ENCODE measurements at regions of chr10 and their contacts with region 1.

Region 1: GRCh38 chr10:100009793-100010676 is at the start of gene DNMBP:
- DNase-seq: peak; percentile 82 to 91
- ATAC-seq: peak; percentile 72 to 89
- H3K4me3 ChIP-seq: peak within 1 kb of the TSS; percentile 81
- H3K27ac ChIP-seq: peak within 1 kb of the TSS; percentile 83 to 92
- H3K4me1 ChIP-seq: peaks cover 31% of the 10 kb centered on the region
- CTCF ChIP-seq: peak; percentile 90
- EP300 ChIP-seq: no peak
- POLR2A ChIP-seq: peak; percentile 37
- RAD21 ChIP-seq: peak; percentile 34 to 60; a peak in 4 of 5 replicates
- polyA plus RNA-seq, gene DNMBP: 20.3 and 24.3 TPM in 2 replicates

Region 2: DNA sequence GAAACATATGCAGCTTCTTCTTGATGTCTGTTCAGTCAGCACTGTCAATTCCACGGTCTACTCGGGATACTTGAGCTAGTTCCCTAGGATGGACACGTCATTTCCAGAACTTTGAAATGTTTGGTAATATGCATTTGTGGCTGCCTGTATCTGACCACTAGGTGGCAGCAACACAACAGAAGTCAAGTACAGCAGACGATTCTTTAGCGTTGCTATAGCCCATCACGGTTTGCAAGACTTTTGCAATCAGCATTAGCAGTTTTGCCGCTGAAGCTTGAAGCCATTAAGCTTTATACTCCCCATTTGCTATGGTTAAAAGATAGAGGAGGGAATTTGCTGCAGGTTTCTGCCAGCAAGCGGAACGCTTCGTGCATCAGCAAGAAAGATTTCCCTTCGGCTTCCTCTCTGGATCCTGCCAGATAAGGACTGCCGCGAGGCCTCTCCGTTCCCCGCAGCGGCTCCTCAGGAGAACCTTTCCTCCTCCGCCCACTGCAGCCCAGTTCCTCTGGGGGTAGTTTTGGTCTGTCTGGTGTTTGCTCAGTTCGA is 164.1 kb before region 1 on chr10:
- CTCF ChIA-PET with region 1: interaction called, 26 read pairs
- POLR2A ChIA-PET with region 1: interaction called, 3 read pairs
- DNase-seq: peak; percentile 60 to 92
- ATAC-seq: peak; percentile 72 to 78
- H3K4me3 ChIP-seq: no peak overlapping the region
- H3K27ac ChIP-seq: peak overlapping the region in 1 of 2 experiments; percentile 31; a peak in 2 of 6 replicates
- H3K4me1 ChIP-seq: peaks cover 56% of the 10 kb centered on the region
- CTCF ChIP-seq: peak; percentile 92
- EP300 ChIP-seq: no peak
- POLR2A ChIP-seq: no peak
- RAD21 ChIP-seq: peak; percentile 81 to 82

Region 3: DNA sequence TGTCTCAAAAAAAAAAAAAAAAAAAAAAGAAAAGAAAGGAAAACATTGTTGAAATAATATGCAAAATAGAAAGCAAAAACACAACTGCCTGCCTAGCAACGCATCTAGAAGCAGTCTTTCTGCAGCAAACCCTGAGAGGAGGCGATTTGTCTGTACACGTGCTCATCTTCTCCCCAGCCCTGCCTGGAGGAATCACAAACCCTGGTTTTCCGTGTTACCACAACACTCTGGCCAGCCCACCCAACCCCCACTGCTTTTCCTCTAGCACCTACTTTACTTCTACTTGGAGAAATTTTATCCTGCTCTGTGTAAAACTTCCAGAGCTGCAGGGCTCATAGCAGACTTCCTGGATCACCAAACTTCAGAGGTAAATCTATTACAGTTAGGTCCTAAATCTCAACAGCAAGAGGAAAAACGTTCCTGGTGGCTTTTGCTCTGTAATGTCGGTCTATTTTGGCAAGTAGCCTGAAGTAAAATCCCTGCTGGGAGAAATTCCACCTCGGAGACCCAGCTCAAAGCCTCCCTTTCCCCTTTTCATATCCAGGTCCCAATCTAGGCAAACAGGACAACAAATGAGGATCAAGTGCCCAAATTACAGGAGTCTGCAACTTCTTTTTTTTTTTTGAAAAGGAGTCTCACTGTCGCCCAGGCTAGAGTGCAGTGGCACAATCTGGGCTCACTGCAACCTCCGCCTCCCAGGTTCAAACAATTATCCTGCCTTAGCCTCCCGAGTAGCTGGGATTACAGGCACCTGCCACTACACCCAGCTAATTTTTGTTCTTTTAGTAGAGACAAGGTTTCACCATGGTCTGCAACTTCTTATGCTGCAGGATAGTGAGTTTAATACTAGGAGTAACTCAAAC is 91.8 kb before region 1 on chr10:
- CTCF ChIA-PET with region 1: interaction called, 15 read pairs
- POLR2A ChIA-PET with region 1: interaction called, 3 read pairs
- DNase-seq: peak in 1 of 2 experiments; percentile 56
- ATAC-seq: peak; percentile 76 to 82
- H3K4me3 ChIP-seq: peak overlapping the region; percentile 32
- H3K27ac ChIP-seq: peak overlapping the region; percentile 84 to 85
- H3K4me1 ChIP-seq: peaks cover 42% of the 10 kb centered on the region
- CTCF ChIP-seq: no peak
- EP300 ChIP-seq: no peak
- POLR2A ChIP-seq: no peak
- RAD21 ChIP-seq: no peak

Region 4: DNA sequence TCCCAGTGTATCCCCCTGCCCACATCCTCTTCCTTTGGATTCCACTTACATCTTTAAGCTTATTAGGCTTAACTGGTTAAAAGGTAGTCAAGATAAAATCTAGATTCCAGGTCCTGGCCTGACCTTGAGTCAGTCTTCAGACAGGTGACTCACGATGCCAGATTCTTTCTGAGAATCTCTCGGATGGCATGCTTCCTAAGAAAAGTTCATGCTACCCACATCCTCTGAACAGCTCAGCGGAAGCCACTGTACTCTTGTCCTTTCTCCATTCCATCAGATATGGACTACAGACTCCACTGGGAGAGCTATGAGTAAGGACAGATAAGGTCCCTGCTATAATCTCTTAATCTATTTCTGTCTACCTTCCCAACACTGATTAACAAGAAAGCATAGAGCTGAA is 43.7 kb before region 1 on chr10:
- CTCF ChIA-PET with region 1: interaction called, 23 read pairs
- POLR2A ChIA-PET with region 1: interaction called, 16 read pairs
- DNase-seq: peak; percentile 64 to 72
- ATAC-seq: peak; percentile 90 to 91
- H3K4me3 ChIP-seq: no peak overlapping the region
- H3K27ac ChIP-seq: peak overlapping the region; percentile 62 to 84
- H3K4me1 ChIP-seq: peaks cover 47% of the 10 kb centered on the region
- CTCF ChIP-seq: no peak
- EP300 ChIP-seq: peak; percentile 39 to 62; a peak in 2 of 5 replicates
- POLR2A ChIP-seq: no peak
- RAD21 ChIP-seq: peak; percentile 14 to 25; a peak in 1 of 5 replicates

Region 5: GRCh38 chr10:99993701-99994689 is 16.0 kb before region 1 on chr10:
- CTCF ChIA-PET with region 1: interaction called, 14 read pairs
- POLR2A ChIA-PET with region 1: interaction called, 6 read pairs
- DNase-seq: no peak
- ATAC-seq: peak in 1 of 2 experiments; percentile 46; a peak in 3 of 6 replicates
- H3K4me3 ChIP-seq: no peak overlapping the region
- H3K27ac ChIP-seq: peak overlapping the region in 1 of 2 experiments; percentile 29; a peak in 2 of 6 replicates
- H3K4me1 ChIP-seq: peaks cover 24% of the 10 kb centered on the region
- CTCF ChIP-seq: no peak
- EP300 ChIP-seq: no peak
- POLR2A ChIP-seq: no peak
- RAD21 ChIP-seq: no peak

Region 6: GRCh38 chr10:100038561-100039071 is 28.6 kb after region 1 on chr10:
- CTCF ChIA-PET with region 1: interaction called, 101 read pairs
- POLR2A ChIA-PET with region 1: no interaction called
- DNase-seq: no peak
- ATAC-seq: peak in 1 of 2 experiments; percentile 52; a peak in 3 of 6 replicates
- H3K4me3 ChIP-seq: no peak overlapping the region
- H3K27ac ChIP-seq: peak overlapping the region; percentile 33 to 71; a peak in 4 of 6 replicates
- H3K4me1 ChIP-seq: peaks cover 25% of the 10 kb centered on the region
- CTCF ChIP-seq: no peak
- EP300 ChIP-seq: no peak
- POLR2A ChIP-seq: no peak
- RAD21 ChIP-seq: no peak

Measured in A549 (cell line).